ENCODE measurements at regions of chr2 and their contacts with region 1.

Region 1: GRCh38 chr2:231604685-231605606 is 12.3 kb downstream of the TEX44 start:
- DNase-seq: peak; percentile 99
- H3K4me3 ChIP-seq: peak overlapping the region; percentile 34
- H3K27ac ChIP-seq: peak overlapping the region; percentile 95
- H3K4me1 ChIP-seq: peaks cover 11% of the 10 kb centered on the region
- H3K27me3 ChIP-seq: no peaks in the 10 kb centered on the region
- CTCF ChIP-seq: no peak

Region 2: DNA sequence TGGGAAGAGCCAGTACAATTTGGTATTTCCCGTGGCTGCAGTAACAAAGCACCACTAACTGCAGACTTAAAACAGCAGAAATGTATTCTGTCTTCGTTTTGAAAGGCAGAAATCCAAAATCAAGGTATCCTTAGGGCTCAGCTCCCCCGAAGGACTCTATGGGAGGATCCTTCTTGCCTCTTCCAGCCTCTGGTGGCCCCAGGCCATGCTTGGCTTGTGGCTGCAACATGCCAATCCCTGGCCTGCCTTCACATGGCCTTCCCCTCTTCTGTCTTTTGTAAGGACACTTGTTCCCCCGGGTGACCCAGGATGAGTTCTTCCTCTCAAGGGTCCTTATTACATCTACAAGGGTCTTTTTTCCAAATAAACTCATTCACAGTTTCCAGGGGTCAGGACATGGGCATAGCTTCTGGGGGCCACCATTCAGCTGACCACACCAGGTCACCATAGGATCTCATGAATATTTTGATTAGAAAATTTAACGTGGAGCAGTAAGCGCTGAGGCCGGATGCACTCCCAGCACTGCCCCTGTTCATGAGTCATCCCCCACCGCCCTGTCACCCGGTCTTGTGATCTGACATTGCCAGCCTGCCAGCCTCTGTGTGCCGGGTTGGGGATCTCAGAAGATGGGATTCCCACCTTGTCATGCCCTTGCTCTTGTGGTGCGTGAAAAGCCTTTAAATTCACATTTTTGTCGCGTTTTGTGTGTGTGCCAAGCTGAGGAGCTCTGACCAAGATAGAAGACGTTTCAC is 270.6 kb before region 1 on chr2:
- intact Hi-C with region 1: no loop called
- DNase-seq: no peak
- H3K4me3 ChIP-seq: no peak overlapping the region
- H3K27ac ChIP-seq: no peak overlapping the region
- H3K4me1 ChIP-seq: no peaks in the 10 kb centered on the region
- H3K27me3 ChIP-seq: no peaks in the 10 kb centered on the region
- CTCF ChIP-seq: no peak

Region 3: GRCh38 chr2:231514951-231515297 is 90.0 kb before region 1 on chr2:
- intact Hi-C with region 1: loop called (anchors 5 kb)
- DNase-seq: no peak
- H3K4me3 ChIP-seq: peak overlapping the region; percentile 49
- H3K27ac ChIP-seq: peak overlapping the region; percentile 48
- H3K4me1 ChIP-seq: no peaks in the 10 kb centered on the region
- H3K27me3 ChIP-seq: no peaks in the 10 kb centered on the region
- CTCF ChIP-seq: no peak

Region 4: DNA sequence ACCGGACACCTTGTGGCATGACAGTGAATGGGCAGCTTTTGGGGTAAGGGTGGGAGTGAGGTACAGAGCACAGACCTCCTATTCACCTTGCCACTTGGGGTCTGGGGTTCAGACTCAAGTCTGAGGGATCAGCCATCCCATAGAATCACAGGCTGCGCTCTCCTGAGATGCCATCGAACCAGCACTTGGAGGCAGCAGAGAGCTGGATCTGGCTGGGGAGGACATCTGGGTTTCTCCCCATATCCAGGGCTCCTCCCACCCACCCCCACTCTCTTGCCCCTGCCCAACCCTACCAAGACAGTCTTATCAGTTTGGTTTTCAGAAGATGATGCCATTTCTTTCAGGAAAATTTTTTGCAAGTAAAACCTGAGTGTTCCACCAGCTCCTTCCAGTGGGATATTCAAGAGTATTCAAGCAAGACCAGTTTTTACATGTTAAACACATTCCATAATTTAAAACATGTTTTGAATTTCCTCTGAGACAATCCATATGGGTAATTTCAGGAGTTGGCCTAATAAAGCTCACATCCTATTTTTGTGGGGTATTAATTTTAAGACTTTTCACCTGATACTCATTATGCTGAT is 41.5 kb before region 1 on chr2:
- intact Hi-C with region 1: loop called (anchors 2 kb)
- DNase-seq: peak; percentile 38
- H3K4me3 ChIP-seq: no peak overlapping the region
- H3K27ac ChIP-seq: no peak overlapping the region
- H3K4me1 ChIP-seq: no peaks in the 10 kb centered on the region
- H3K27me3 ChIP-seq: no peaks in the 10 kb centered on the region
- CTCF ChIP-seq: peak; percentile 49

Region 5: DNA sequence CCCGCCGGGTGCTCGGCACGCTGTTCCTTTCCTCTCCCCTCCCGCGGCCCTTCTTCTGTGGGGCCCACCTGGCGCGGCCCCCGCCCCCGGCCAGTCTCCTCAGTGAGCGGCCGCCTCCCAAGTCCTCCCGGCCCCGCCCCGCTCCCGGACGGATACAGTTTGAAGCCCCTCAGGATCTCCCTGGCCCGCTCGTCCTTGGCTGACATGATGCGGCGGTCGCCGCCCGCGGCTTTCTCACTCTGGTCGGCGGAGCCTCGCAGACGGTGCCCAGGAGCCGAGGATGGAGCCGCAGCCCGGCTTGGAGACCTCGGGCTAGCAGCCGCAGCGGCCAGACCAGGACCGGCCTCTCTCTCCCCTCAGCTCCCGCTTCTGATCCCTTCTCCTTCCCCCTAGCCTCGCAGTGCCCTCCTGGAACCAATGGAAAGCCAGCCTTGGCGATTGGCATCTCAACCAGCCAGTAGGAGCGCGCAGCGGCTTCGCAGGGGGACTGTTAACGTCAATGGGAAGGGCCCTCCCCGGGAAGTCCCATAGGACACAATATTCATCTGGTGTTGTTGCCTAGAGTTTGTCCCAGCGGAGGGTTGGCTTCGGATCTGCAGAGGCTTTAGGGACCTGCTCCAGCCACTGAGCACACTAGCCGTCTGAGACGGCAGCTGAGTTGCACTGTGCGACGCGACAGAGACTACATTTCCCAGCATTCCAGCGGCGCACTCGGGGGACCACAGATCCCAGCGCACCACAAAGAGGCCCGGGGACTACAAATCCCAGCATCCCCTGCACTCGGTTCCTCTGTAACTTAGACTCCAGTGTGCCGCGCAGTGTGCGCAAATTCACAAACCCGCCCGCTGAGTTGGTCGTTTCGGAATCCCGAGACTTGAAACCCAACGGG is 176.2 kb after region 1 on chr2 and contains the start of gene PDE6D:
- intact Hi-C with region 1: loop called (anchors 10 kb)
- DNase-seq: peak; percentile 100
- H3K4me3 ChIP-seq: peak within 1 kb of the TSS; percentile 91
- H3K27ac ChIP-seq: peak within 1 kb of the TSS; percentile 84
- H3K4me1 ChIP-seq: peaks cover 10% of the 10 kb centered on the region
- H3K27me3 ChIP-seq: no peaks in the 10 kb centered on the region
- CTCF ChIP-seq: no peak
- total RNA-seq, gene PDE6D: 20.0 to 21.4 TPM